Activated CD8-positive, alpha-beta T cell treated with anti-CD3 and anti-CD28 coated beads, Interleukin-2, amount 10 ng/mL, durations not matched to agents 7 days and 5 days (primary cell): ENCODE measurements at regions of chr4 and their contacts with region 1.

Region 1: GRCh38 chr4:85147439-85148076 is 181.1 kb upstream of the WDFY3 start:
- DNase-seq: peak; percentile 26
- ATAC-seq: peak; percentile 76
- H3K4me3 Mint-ChIP-seq: no peak overlapping the region
- H3K27ac Mint-ChIP-seq: no peak overlapping the region
- H3K4me1 Mint-ChIP-seq: no peaks in the 10 kb centered on the region
- H3K27me3 Mint-ChIP-seq: peaks cover 2% of the 10 kb centered on the region

Region 2: GRCh38 chr4:85165810-85166209 is 18.3 kb after region 1 on chr4:
- CTCF ChIA-PET with region 1: no interaction called
- POLR2A ChIA-PET with region 1: no interaction called
- DNase-seq: no peak
- ATAC-seq: no peak
- H3K4me3 Mint-ChIP-seq: no peak overlapping the region
- H3K27ac Mint-ChIP-seq: no peak overlapping the region
- H3K4me1 Mint-ChIP-seq: no peaks in the 10 kb centered on the region
- H3K27me3 Mint-ChIP-seq: no peaks in the 10 kb centered on the region

Region 3: GRCh38 chr4:85747882-85748491 is 600.4 kb after region 1 on chr4:
- CTCF ChIA-PET with region 1: interaction called, 14 read pairs
- POLR2A ChIA-PET with region 1: no interaction called
- DNase-seq: peak; percentile 26
- ATAC-seq: no peak
- H3K4me3 Mint-ChIP-seq: no peak overlapping the region
- H3K27ac Mint-ChIP-seq: no peak overlapping the region
- H3K4me1 Mint-ChIP-seq: no peaks in the 10 kb centered on the region
- H3K27me3 Mint-ChIP-seq: no peaks in the 10 kb centered on the region